Tibial artery (tissue), 4 donors: ENCODE measurements at regions of chr5 and their contacts with region 1.

Region 1: GRCh38 chr5:112146323-112147226 is 272.5 kb downstream of the EPB41L4A start:
- DNase-seq: peak; percentile 56 to 72
- H3K4me3 ChIP-seq: no peak overlapping the region
- H3K27ac ChIP-seq: peak overlapping the region; percentile 42 to 43
- H3K4me1 ChIP-seq: peaks cover 0 to 20% (median 7%) of the 10 kb centered on the region in 4 donors
- H3K27me3 ChIP-seq: no peaks in the 10 kb centered on the region
- CTCF ChIP-seq: peak; percentile 83 to 96

Region 2: DNA sequence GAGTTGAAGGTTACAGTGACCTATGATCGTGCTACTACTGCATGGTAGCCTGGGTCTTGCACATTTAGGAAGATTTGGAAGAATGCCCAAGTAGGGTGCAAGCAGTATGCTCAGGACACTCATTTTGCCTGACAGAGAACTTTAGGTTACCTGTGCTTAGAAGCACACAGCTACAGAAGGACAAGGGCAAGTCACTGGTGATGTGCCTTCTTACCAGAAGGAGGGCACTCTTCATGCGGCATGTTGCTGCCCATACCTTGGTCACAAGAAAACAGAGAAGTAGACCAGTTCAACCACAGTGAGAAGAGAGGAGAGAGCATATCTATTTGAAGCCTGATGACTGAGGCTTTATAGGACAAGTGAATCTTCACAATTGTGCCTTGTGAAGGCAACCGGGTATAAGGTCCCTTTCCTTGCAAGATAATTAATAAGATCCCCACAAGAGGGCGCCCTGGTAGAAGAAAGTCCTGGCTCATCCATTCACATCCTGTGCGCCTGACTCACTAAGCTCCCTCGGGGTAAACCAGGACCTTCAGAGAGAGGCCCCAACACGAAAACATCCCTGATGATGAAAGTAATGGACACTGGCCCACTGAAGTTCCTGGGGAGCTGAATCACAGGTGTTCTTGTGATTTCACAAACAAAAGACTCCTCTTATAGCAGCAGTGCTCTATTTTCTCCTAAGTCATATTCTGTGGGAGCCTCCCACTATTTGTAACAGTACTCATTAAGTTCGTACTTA is 596.1 kb before region 1 on chr5:
- intact Hi-C with region 1: loop called (anchors 5 kb)
- DNase-seq: peak; percentile 87
- H3K4me3 ChIP-seq: no peak overlapping the region
- H3K27ac ChIP-seq: no peak overlapping the region
- H3K4me1 ChIP-seq: peaks cover 0 to 13% (median 4%) of the 10 kb centered on the region in 4 donors
- H3K27me3 ChIP-seq: no peaks in the 10 kb centered on the region
- CTCF ChIP-seq: peak; percentile 53 to 83

Region 3: DNA sequence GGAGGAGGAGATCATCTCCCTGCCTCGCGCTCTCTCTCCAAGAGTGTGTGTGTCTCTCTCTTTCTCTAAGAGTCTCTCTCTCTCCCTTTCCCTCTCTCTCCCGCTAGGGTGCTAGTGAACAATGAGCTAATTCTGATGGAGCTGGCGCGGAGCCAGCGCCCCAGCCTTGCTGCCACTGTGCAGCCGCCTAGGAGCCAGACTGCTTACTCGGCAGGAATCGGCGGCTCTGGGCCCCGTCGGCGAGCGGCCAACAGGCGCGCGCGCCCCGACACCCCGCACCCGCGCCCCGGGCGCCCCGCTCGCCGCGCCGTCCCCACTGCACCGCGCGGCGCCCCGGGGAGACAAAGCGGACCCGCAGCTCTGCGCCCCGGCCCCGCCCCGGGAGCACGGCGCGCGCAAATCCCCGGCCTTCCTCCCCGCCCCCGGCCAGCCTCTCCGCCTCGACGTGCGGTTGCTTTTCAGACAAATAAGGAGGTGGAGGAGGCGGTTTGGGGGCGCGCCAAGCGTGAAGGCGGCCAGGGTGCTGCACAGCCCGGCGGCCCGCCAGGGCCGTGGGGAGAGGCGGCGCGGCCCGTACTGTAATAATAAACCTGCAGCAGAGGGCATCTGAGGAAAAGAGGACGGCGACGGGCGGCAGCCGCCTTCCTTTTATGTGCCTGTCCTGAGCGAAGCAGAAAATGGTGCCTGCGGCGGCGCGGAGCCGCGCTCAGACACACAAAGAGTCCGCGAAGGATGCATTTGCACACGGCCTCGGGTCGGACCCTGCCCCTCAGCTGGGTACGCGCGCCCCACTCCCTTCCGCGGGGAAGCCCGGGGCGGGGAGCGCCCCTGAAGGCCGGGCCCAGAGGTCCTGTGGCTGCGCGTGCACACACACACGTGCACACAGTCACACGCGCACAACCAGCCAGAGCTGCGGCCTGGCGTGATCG is 389.0 kb before region 1 on chr5:
- intact Hi-C with region 1: loop called (anchors 10 kb)
- DNase-seq: peak; percentile 88 to 98
- H3K4me3 ChIP-seq: peak overlapping the region; percentile 62 to 68
- H3K27ac ChIP-seq: peak overlapping the region; percentile 70 to 80
- H3K4me1 ChIP-seq: peaks cover 0 to 37% (median 11%) of the 10 kb centered on the region in 4 donors
- H3K27me3 ChIP-seq: no peaks in the 10 kb centered on the region
- CTCF ChIP-seq: peak; percentile 30 to 51

Region 4: GRCh38 chr5:112049738-112050137 is 96.8 kb before region 1 on chr5:
- intact Hi-C with region 1: no loop called
- DNase-seq: no peak
- H3K4me3 ChIP-seq: no peak overlapping the region
- H3K27ac ChIP-seq: no peak overlapping the region
- H3K4me1 ChIP-seq: no peaks in the 10 kb centered on the region
- H3K27me3 ChIP-seq: no peaks in the 10 kb centered on the region
- CTCF ChIP-seq: no peak